Naive thymus-derived CD4-positive, alpha-beta T cell (primary cell): ENCODE measurements at regions of chr4 and their contacts with region 1.

Region 1: GRCh38 chr4:47907089-47907646 is 7.2 kb downstream of the NFXL1 start:
- DNase-seq: no peak
- ATAC-seq: no peak
- H3K4me3 ChIP-seq: no peak overlapping the region
- H3K4me3 Mint-ChIP-seq: no peak overlapping the region
- H3K27ac ChIP-seq: no peak overlapping the region
- H3K27ac Mint-ChIP-seq: peak overlapping the region in 2 of 9 donors; percentile 26 to 59
- H3K4me1 ChIP-seq: no peaks in the 10 kb centered on the region
- H3K4me1 Mint-ChIP-seq: peaks cover 0 to 33% (median 22%) of the 10 kb centered on the region in 7 donors
- H3K27me3 ChIP-seq: no peaks in the 10 kb centered on the region
- H3K27me3 Mint-ChIP-seq: no peaks in the 10 kb centered on the region

Region 2: DNA sequence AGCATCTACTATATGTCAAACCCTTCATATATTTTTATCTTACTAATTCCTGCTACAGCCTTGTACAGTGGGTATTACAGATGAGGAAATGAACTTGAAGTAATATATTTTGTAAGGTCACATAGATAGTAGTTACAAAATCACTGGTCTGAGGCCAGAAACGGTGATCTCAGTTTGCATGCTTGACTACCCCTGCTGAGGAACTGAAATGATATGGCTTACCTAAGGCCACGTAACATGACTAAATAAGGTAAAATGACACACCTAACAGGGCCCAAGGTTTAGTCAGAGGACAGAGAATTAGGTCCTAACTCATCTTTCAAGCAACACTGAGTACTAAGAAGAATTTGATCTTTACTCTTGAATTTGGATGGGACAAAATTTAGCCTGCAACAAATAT is 442.2 kb before region 1 on chr4:
- CTCF ChIA-PET with region 1: no interaction called
- POLR2A ChIA-PET with region 1: no interaction called
- intact Hi-C with region 1: no loop called
- DNase-seq: no peak
- ATAC-seq: no peak
- H3K4me3 ChIP-seq: no peak overlapping the region
- H3K4me3 Mint-ChIP-seq: no peak overlapping the region
- H3K27ac ChIP-seq: no peak overlapping the region
- H3K27ac Mint-ChIP-seq: peak overlapping the region in 1 of 9 donors; percentile 97
- H3K4me1 ChIP-seq: peaks cover 9 to 17% of the 10 kb centered on the region in 2 donors
- H3K4me1 Mint-ChIP-seq: peaks cover 20 to 35% (median 31%) of the 10 kb centered on the region in 7 donors
- H3K27me3 ChIP-seq: no peaks in the 10 kb centered on the region
- H3K27me3 Mint-ChIP-seq: peaks cover 0 to 7% (median 5%) of the 10 kb centered on the region in 5 donors

Region 3: GRCh38 chr4:47577779-47578553 is 329.2 kb before region 1 on chr4:
- CTCF ChIA-PET with region 1: no interaction called
- POLR2A ChIA-PET with region 1: no interaction called
- intact Hi-C with region 1: no loop called
- DNase-seq: no peak
- ATAC-seq: no peak
- H3K4me3 ChIP-seq: no peak overlapping the region
- H3K4me3 Mint-ChIP-seq: no peak overlapping the region
- H3K27ac ChIP-seq: no peak overlapping the region
- H3K27ac Mint-ChIP-seq: no peak overlapping the region
- H3K4me1 ChIP-seq: no peaks in the 10 kb centered on the region
- H3K4me1 Mint-ChIP-seq: no peaks in the 10 kb centered on the region
- H3K27me3 ChIP-seq: no peaks in the 10 kb centered on the region
- H3K27me3 Mint-ChIP-seq: no peaks in the 10 kb centered on the region

Region 4: DNA sequence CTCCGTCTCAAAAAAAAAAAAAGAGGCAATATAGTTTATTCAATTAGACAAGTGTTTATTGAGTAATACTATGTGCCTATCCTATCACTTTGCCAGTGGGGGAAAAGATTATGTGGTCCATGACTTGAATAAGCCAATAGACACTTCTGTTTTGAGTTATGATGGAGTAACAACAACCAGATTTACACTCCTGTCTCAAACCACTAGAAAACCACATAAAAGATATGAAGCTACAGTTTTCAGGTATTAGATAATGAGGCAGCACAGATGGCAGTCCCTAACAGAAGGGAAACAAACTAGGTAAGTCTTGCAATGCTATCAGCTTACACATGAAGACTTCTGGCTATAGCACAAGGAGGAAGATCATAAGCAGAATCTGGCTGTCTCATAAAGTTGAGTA is 15.2 kb before region 1 on chr4:
- CTCF ChIA-PET with region 1: no interaction called
- POLR2A ChIA-PET with region 1: interaction called, 3 read pairs
- intact Hi-C with region 1: loop called in 1 of 2 experiments (anchors 2 kb)
- DNase-seq: peak in 3 of 9 donors; percentile 2 to 10 (median 10)
- ATAC-seq: no peak
- H3K4me3 ChIP-seq: no peak overlapping the region
- H3K4me3 Mint-ChIP-seq: no peak overlapping the region
- H3K27ac ChIP-seq: no peak overlapping the region
- H3K27ac Mint-ChIP-seq: peak overlapping the region in 4 of 9 donors; percentile 1 to 38 (median 8)
- H3K4me1 ChIP-seq: no peaks in the 10 kb centered on the region
- H3K4me1 Mint-ChIP-seq: peaks cover 6 to 18% (median 13%) of the 10 kb centered on the region in 7 donors
- H3K27me3 ChIP-seq: no peaks in the 10 kb centered on the region
- H3K27me3 Mint-ChIP-seq: no peaks in the 10 kb centered on the region

Region 5: DNA sequence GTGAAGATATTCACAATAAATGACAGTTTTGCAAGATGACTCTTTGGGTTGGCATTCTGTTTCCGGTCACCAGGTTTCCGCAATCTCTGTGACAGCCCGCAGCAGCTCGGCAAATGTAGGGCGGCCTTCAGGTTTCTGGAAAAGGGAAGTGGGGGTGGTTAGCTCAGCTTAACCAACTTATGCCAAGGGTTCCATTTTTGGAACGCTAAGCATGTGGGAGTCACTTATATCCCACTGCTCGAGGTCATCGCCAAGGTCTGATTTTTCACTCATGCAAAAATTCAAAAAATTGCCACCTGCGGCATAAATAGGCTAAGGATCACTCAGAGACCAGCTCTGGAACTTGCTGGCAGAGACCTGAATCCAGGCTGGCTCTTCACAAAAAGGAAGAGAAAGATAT is 160.4 kb after region 1 on chr4:
- CTCF ChIA-PET with region 1: no interaction called
- POLR2A ChIA-PET with region 1: no interaction called
- intact Hi-C with region 1: no loop called
- DNase-seq: no peak
- ATAC-seq: no peak
- H3K4me3 ChIP-seq: no peak overlapping the region
- H3K4me3 Mint-ChIP-seq: no peak overlapping the region
- H3K27ac ChIP-seq: no peak overlapping the region
- H3K27ac Mint-ChIP-seq: peak overlapping the region in 2 of 9 donors; percentile 19 to 28
- H3K4me1 ChIP-seq: no peaks in the 10 kb centered on the region
- H3K4me1 Mint-ChIP-seq: peaks cover 5 to 23% (median 15%) of the 10 kb centered on the region in 7 donors
- H3K27me3 ChIP-seq: no peaks in the 10 kb centered on the region
- H3K27me3 Mint-ChIP-seq: no peaks in the 10 kb centered on the region